ENCODE measurements at regions of chr17 and their contacts with region 1.

Region 1: GRCh38 chr17:3535253-3535995 is 22.2 kb downstream of the TRPV3 start:
- DNase-seq: peak; percentile 67 to 98 (median 80)

Region 2: DNA sequence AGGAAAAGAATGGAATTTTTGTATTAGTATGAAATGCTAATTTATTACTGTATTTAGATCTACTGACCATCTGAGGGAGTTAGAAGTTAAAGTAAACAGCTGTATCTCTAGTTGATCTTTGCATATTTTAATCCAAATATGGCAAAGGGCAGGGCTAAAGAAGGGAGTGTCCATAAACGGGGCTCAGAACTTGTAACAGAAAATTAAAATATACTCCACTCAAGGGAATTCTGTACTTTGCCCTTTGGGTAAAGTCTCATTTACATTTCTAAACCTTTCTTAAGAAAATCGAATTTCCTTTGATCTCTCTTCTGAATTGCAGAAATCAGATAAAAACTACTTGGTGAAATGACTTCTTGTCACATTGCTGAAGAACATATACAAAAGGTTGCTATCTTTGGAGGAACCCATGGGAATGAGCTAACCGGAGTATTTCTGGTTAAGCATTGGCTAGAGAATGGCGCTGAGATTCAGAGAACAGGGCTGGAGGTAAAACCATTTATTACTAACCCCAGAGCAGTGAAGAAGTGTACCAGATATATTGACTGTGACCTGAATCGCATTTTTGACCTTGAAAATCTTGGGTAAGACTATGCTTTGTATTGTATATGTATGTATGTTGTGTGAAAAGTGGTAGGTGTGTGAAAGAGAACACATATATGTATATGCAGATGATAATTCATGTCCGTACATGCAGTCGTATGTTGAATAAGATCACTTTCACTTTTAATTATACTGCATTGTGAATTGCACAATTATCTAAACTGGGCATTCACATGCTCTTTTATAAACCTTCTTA is 59.4 kb before region 1 on chr17 and contains the start of gene ASPA:
- intact Hi-C with region 1: loop called (anchors 5 kb)
- DNase-seq: no peak

Region 3: DNA sequence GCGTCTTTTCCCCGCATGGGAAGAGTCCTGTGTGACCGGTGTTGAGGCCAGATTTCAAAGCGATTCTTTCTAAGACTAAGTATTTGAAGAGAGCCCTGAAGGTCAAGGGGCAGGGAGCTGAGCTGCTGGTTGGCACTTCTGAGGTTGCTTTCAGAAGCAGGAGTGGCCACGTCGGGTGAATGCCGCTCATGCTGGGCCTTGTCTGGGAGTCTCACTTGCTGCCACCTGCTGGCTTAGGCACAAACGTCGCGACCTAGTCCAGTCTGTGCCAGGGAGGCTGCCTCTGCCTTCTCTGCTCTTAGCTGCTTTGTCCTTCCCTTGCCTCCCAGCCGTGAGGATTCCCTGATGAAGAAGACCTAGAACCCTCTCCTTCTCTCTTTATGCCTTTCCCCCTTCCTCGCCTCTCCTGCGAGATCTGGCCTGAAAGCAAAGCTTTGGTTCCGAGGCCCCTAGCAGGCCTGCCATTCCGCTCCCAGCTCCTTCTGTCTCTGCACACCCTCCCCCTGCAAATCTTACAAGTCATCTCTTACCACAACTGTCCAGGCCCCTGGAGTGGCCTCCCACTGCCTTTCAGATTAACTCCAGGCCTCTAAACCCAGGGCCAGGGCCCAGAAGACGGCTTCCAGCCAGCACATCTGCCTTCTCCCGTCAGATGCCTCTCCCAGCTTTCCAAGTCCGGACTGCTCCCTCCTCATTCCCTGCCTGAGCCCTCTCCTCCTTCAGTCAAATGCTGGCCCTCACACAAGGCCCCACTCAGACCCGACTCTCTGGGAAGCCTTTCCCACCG is 112.5 kb after region 1 on chr17:
- intact Hi-C with region 1: loop called (anchors 5 kb)
- DNase-seq: peak; percentile 56 to 96 (median 78)

Region 4: GRCh38 chr17:3754458-3755334 is 219.3 kb after region 1 on chr17:
- intact Hi-C with region 1: no loop called
- DNase-seq: no peak

Measured in posterior cingulate gyrus (tissue), 11 donors.